ENCODE measurements at regions of chr3 and their contacts with region 1.

Region 1: GRCh38 chr3:160754855-160755747 is 930 bp upstream of the PPM1L start:
- DNase-seq: peak; percentile 95
- ATAC-seq: peak; percentile 89
- H3K4me3 Mint-ChIP-seq: peak overlapping the region; percentile 90
- H3K27ac Mint-ChIP-seq: peak overlapping the region; percentile 90
- H3K4me1 Mint-ChIP-seq: peaks cover 26% of the 10 kb centered on the region
- H3K27me3 Mint-ChIP-seq: peaks cover 23% of the 10 kb centered on the region

Region 2: DNA sequence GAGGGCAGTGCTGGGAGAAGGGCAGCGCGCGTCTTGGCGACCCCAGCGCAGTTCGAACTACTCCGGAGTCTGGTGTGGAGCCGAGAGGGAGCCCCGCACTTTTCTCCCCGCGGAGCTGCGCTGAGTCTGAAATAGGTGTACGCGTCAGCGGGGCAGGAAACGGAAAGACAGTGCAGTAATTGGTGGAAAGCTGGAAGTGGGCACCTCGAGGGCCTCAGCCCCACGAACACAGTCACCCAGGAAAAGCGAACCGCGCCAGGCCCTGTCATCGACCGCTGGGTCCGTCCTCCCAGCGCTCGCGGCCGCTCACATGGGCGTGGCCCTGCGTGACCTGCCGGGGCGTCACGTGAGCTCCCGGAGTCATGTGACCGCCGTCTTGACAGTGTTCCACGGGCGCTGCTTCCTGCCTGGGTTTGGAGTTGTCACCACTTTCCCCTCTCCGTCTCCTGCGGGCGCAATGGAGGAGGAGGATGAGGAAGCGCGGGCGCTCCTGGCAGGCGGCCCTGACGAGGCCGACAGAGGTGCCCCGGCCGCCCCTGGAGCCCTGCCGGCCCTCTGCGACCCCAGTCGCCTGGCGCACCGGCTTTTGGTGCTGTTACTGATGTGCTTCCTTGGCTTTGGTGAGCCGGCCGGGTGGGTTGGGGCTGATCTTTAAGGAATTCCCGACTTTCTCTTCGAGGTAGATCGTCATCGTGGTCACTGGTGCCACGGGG is 1953.2 kb before region 1 on chr3 and contains the start of gene MFSD1:
- CTCF ChIA-PET with region 1: no interaction called
- POLR2A ChIA-PET with region 1: no interaction called
- intact Hi-C with region 1: loop called in 1 of 2 experiments (anchors 10 kb)
- DNase-seq: peak; percentile 94
- ATAC-seq: peak; percentile 92
- H3K4me3 Mint-ChIP-seq: peak within 1 kb of the TSS; percentile 81
- H3K27ac Mint-ChIP-seq: peak within 1 kb of the TSS; percentile 87
- H3K4me1 Mint-ChIP-seq: peaks cover 22% of the 10 kb centered on the region
- H3K27me3 Mint-ChIP-seq: no peaks in the 10 kb centered on the region
- total RNA-seq, gene MFSD1: 6.9 to 13.1 TPM

Region 3: GRCh38 chr3:160417311-160417710 is 337.8 kb before region 1 on chr3:
- CTCF ChIA-PET with region 1: no interaction called
- POLR2A ChIA-PET with region 1: no interaction called
- intact Hi-C with region 1: no loop called
- DNase-seq: no peak
- ATAC-seq: no peak
- H3K4me3 Mint-ChIP-seq: no peak overlapping the region
- H3K27ac Mint-ChIP-seq: no peak overlapping the region
- H3K4me1 Mint-ChIP-seq: no peaks in the 10 kb centered on the region
- H3K27me3 Mint-ChIP-seq: no peaks in the 10 kb centered on the region

Region 4: GRCh38 chr3:160449636-160450598 is 305.2 kb before region 1 on chr3 and contains the start of gene TRIM59:
- CTCF ChIA-PET with region 1: no interaction called
- POLR2A ChIA-PET with region 1: no interaction called
- intact Hi-C with region 1: loop called (anchors 1 to 2 kb)
- DNase-seq: peak; percentile 99
- ATAC-seq: peak; percentile 95
- H3K4me3 Mint-ChIP-seq: peak within 1 kb of the TSS; percentile 97
- H3K27ac Mint-ChIP-seq: peak within 1 kb of the TSS; percentile 96
- H3K4me1 Mint-ChIP-seq: peaks cover 20% of the 10 kb centered on the region
- H3K27me3 Mint-ChIP-seq: no peaks in the 10 kb centered on the region
- total RNA-seq, gene TRIM59: 32.5 to 42.2 TPM

Region 5: GRCh38 chr3:160720123-160720746 is 34.9 kb before region 1 on chr3:
- CTCF ChIA-PET with region 1: no interaction called
- POLR2A ChIA-PET with region 1: no interaction called
- intact Hi-C with region 1: no loop called
- DNase-seq: no peak
- ATAC-seq: no peak
- H3K4me3 Mint-ChIP-seq: no peak overlapping the region
- H3K27ac Mint-ChIP-seq: no peak overlapping the region
- H3K4me1 Mint-ChIP-seq: no peaks in the 10 kb centered on the region
- H3K27me3 Mint-ChIP-seq: no peaks in the 10 kb centered on the region

Region 6: GRCh38 chr3:160801386-160802118 is 46.5 kb after region 1 on chr3:
- CTCF ChIA-PET with region 1: no interaction called
- POLR2A ChIA-PET with region 1: interaction called, 5 read pairs
- intact Hi-C with region 1: loop called (anchors 1 to 2 kb)
- DNase-seq: peak; percentile 73
- ATAC-seq: peak; percentile 90
- H3K4me3 Mint-ChIP-seq: peak overlapping the region; percentile 20
- H3K27ac Mint-ChIP-seq: peak overlapping the region; percentile 44
- H3K4me1 Mint-ChIP-seq: peaks cover 20% of the 10 kb centered on the region
- H3K27me3 Mint-ChIP-seq: peaks cover 5% of the 10 kb centered on the region

Region 7: GRCh38 chr3:161220850-161221753 is 466.0 kb after region 1 on chr3 and contains the start of gene NMD3:
- CTCF ChIA-PET with region 1: interaction called, 3 read pairs
- POLR2A ChIA-PET with region 1: no interaction called
- intact Hi-C with region 1: loop called (anchors 1 to 5 kb)
- DNase-seq: peak; percentile 97
- ATAC-seq: peak; percentile 98
- H3K4me3 Mint-ChIP-seq: peak within 1 kb of the TSS; percentile 86
- H3K27ac Mint-ChIP-seq: peak within 1 kb of the TSS; percentile 88
- H3K4me1 Mint-ChIP-seq: peaks cover 26% of the 10 kb centered on the region
- H3K27me3 Mint-ChIP-seq: peaks cover 4% of the 10 kb centered on the region
- total RNA-seq, gene NMD3: 49.6 to 65.5 TPM